Breast epithelium (tissue), 4 donors: ENCODE measurements at regions of chr4 and their contacts with region 1.

Region 1: DNA sequence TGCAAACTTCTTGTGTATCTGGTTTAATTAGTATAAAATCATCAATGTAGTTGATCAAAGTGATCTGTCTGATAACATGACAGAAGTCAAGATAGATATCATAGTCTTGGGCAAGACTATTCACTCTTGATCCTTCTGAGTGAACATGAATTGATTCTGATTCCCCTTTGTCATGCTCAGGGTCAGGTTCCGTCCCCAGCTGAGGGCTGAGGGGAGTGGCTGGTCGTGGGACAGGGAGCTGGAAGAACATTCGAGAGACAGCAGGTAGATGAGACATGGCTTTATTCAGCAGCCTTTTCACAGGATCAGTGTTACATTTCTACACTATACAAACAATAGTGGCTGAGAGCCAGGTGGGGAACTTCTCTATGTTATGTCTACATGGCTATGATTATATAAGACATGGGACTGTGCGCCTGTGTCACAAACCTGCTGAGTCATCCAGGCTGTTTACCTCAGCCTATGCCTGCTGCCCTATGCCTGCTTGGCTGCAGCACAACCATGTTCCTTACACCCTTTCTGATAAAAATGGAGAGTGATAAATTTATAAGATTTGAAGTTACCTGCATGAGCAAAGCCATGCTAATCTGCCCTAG is 586.9 kb upstream of the NR3C2 start:
- DNase-seq: no peak
- H3K4me3 ChIP-seq: no peak overlapping the region
- H3K27ac ChIP-seq: no peak overlapping the region
- H3K4me1 ChIP-seq: no peaks in the 10 kb centered on the region
- H3K27me3 ChIP-seq: no peaks in the 10 kb centered on the region
- CTCF ChIP-seq: no peak
- POLR2A ChIP-seq: no peak

Region 2: DNA sequence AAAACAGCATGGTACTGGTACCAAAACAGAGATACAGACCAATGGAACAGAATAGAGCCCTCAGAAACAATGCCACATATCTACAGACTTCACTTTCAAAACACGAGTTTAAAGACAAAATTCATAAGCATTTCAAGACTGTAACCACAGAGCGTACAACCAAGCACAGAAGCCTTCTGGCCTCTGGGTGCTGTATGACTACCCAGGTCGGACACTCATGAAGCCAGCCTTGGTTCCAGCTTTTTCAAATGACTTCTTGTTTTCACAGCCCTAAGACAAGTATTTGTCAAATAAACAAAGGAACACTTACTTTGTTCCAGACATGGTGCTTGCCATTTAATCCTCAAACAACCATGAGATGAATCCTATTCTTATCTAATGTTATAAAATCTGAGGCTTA is 50.9 kb before region 1 on chr4:
- intact Hi-C with region 1: loop called (anchors 2 kb)
- DNase-seq: no peak
- H3K4me3 ChIP-seq: no peak overlapping the region
- H3K27ac ChIP-seq: no peak overlapping the region
- H3K4me1 ChIP-seq: no peaks in the 10 kb centered on the region
- H3K27me3 ChIP-seq: no peaks in the 10 kb centered on the region
- CTCF ChIP-seq: no peak
- POLR2A ChIP-seq: no peak

Region 3: GRCh38 chr4:149056615-149057014 is 27.5 kb after region 1 on chr4:
- intact Hi-C with region 1: no loop called
- DNase-seq: no peak
- H3K4me3 ChIP-seq: no peak overlapping the region
- H3K27ac ChIP-seq: no peak overlapping the region
- H3K4me1 ChIP-seq: no peaks in the 10 kb centered on the region
- H3K27me3 ChIP-seq: no peaks in the 10 kb centered on the region
- CTCF ChIP-seq: no peak
- POLR2A ChIP-seq: no peak